H1 (cell line): ENCODE measurements at regions of chr2 and their contacts with region 1.

Region 1: DNA sequence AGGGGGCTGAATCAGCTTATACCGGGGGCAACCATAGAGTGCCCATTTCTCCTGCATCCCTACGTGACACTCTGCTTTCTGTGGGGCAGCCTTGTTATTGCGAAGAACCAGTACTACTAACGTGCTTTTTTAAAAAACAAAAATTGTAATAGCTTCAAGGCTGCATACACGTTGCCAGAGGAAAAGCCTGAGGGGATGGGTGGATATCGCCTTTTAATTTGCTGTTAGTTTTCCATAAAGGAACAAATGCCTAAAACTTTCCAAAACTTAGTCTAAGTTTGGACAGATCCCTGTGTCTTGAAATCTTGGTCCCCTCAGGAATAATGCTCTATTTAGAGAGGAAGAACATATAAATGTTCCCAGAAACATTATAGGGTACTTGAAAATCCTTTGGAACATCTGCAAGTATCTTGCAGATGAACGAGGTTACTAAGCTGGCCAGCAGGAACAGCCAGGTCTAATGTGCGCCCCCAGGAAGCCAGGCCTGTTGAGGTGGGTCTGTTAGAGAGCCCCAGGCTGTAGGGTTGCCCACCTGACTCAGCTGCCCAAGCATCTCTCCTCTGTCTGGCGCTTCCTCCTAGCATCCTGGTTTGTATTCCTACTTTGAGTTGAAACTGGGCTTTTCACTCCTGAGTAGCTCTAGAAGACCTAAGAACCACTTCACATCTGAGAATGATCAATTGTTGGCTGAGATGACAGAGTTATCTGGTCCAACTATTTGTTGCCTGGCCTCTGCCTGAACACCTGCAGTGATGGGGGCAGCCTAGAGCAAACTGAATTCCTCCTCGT is 96.9 kb downstream of the TGOLN2 start:
- DNase-seq: no peak
- H3K4me3 ChIP-seq: peak overlapping the region in 1 of 4 experiments; percentile 35; a peak in 1 of 8 replicates
- H3K27ac ChIP-seq: peak overlapping the region; percentile 42; the same call in 1 of the 2 replicates
- H3K4me1 ChIP-seq: peaks cover 26 to 45% (median 35%) of the 10 kb centered on the region in 4 experiments
- H3K27me3 ChIP-seq: no peaks in the 10 kb centered on the region
- CTCF ChIP-seq: peak in 2 of 3 experiments; percentile 32 to 62; a peak in 3 of 4 replicates
- EP300 ChIP-seq: no peak
- POLR2A ChIP-seq: no peak
- RAD21 ChIP-seq: no peak

Region 2: DNA sequence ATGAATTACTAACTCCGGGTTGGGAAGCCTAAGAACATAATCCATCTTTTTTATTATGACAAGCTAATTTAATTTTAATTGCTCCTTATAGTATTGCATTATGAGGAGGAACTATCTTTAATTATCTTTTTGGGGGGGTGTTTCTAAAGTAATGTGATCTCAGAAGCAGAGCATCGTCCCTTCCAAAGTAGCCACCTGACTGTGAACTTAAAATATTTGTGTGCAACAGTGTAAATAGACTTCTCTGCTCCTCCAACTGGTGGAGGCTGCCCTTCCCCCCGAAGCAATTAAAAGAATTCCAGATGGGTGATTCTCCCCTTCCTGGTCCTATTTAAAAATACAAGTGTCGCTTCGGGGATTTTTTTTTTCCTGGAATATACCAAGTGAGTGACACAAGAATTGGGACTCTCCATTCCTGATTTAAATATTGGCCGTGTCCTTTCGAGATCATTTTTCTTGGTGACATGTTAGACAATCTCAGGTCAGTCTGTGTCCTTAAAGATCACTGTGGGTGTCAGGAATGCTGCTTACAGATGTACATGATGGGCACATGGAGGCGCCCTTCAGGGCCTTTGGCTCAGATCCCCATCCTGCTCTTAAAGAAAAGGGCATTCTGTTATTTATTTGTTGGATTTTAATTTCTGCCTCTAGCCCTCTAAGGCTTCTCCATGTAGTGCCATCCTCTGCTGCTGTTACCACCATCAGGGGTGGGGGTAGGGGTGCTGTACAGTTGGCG is 41.9 kb before region 1 on chr2:
- CTCF ChIA-PET with region 1: interaction called, 20 read pairs
- POLR2A ChIA-PET with region 1: no interaction called
- DNase-seq: no peak
- H3K4me3 ChIP-seq: no peak overlapping the region
- H3K27ac ChIP-seq: no peak overlapping the region
- H3K4me1 ChIP-seq: peaks cover 2 to 9% (median 6%) of the 10 kb centered on the region in 4 experiments; a peak in 5 of 7 replicates
- H3K27me3 ChIP-seq: no peaks in the 10 kb centered on the region
- CTCF ChIP-seq: peak; percentile 14 to 30 (median 24)
- EP300 ChIP-seq: no peak
- POLR2A ChIP-seq: no peak
- RAD21 ChIP-seq: peak; percentile 16 to 35; a peak in 2 of 4 replicates

Region 3: GRCh38 chr2:85243101-85244072 is 12.5 kb after region 1 on chr2:
- CTCF ChIA-PET with region 1: interaction called, 15 read pairs
- POLR2A ChIA-PET with region 1: interaction called, 9 read pairs
- DNase-seq: peak in 1 of 2 experiments; percentile 83
- H3K4me3 ChIP-seq: no peak overlapping the region
- H3K27ac ChIP-seq: peak overlapping the region; percentile 1; the same call in 1 of the 2 replicates
- H3K4me1 ChIP-seq: peaks cover 24 to 50% (median 37%) of the 10 kb centered on the region in 4 experiments
- H3K27me3 ChIP-seq: no peaks in the 10 kb centered on the region
- CTCF ChIP-seq: peak; percentile 70 to 78 (median 74)
- EP300 ChIP-seq: no peak
- POLR2A ChIP-seq: no peak
- RAD21 ChIP-seq: peak; percentile 57 to 71

Region 4: GRCh38 chr2:85282914-85283313 is 52.0 kb after region 1 on chr2:
- CTCF ChIA-PET with region 1: interaction called, 12 read pairs
- POLR2A ChIA-PET with region 1: no interaction called
- DNase-seq: no peak
- H3K4me3 ChIP-seq: no peak overlapping the region
- H3K27ac ChIP-seq: no peak overlapping the region
- H3K4me1 ChIP-seq: peaks cover 1 to 4% (median 2%) of the 10 kb centered on the region in 4 experiments; a peak in 6 of 7 replicates
- H3K27me3 ChIP-seq: no peaks in the 10 kb centered on the region
- CTCF ChIP-seq: no peak
- EP300 ChIP-seq: no peak
- POLR2A ChIP-seq: no peak
- RAD21 ChIP-seq: no peak

Region 5: DNA sequence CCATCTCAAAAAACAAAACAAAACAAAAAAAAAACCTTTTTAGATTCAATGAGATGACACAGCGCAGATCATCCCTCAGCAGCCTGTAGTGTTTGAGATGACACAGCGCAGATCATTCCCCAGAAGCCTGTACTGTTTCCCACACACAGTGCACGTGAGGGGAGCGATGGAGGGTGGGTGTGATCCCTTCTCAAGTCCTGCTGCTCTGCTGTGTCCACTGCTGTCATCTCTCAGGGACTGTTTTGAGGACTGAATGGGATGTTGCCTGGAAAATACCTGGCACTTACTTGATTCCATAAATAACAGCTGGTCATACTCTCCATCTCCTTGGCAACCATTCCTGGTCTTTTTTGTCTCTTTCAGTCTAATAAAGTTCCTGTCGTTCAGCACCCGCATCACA is 71.2 kb after region 1 on chr2:
- CTCF ChIA-PET with region 1: interaction called, 22 read pairs
- POLR2A ChIA-PET with region 1: no interaction called
- DNase-seq: no peak
- H3K4me3 ChIP-seq: no peak overlapping the region
- H3K27ac ChIP-seq: no peak overlapping the region
- H3K4me1 ChIP-seq: 0 out of 7 replicates have a peak, but pooled peaks cover 0 to 2% (median 0%) of the 10 kb centered on the region in 4 experiments
- H3K27me3 ChIP-seq: no peaks in the 10 kb centered on the region
- CTCF ChIP-seq: no peak
- EP300 ChIP-seq: no peak
- POLR2A ChIP-seq: no peak
- RAD21 ChIP-seq: no peak